ENCODE measurements at regions of chr1 and their contacts with region 1.

Region 1: GRCh38 chr1:193311226-193311948 is 125.0 kb upstream of the B3GALT2 start:
- DNase-seq: no peak
- H3K4me3 ChIP-seq: no peak overlapping the region
- H3K27ac ChIP-seq: no peak overlapping the region
- H3K4me1 ChIP-seq: no peaks in the 10 kb centered on the region
- H3K27me3 ChIP-seq: no peaks in the 10 kb centered on the region
- CTCF ChIP-seq: no peak

Region 2: GRCh38 chr1:193437785-193438184 is 126.4 kb after region 1 on chr1:
- CTCF ChIA-PET with region 1: no interaction called
- POLR2A ChIA-PET with region 1: no interaction called
- intact Hi-C with region 1: no loop called
- DNase-seq: no peak
- H3K4me3 ChIP-seq: no peak overlapping the region
- H3K27ac ChIP-seq: no peak overlapping the region
- H3K4me1 ChIP-seq: no peaks in the 10 kb centered on the region
- H3K27me3 ChIP-seq: no peaks in the 10 kb centered on the region
- CTCF ChIP-seq: no peak

Region 3: GRCh38 chr1:194378517-194378916 is 1067.1 kb after region 1 on chr1:
- CTCF ChIA-PET with region 1: no interaction called
- POLR2A ChIA-PET with region 1: interaction called, 16 read pairs
- intact Hi-C with region 1: no loop called
- DNase-seq: no peak
- H3K4me3 ChIP-seq: no peak overlapping the region
- H3K27ac ChIP-seq: no peak overlapping the region
- H3K4me1 ChIP-seq: no peaks in the 10 kb centered on the region
- H3K27me3 ChIP-seq: no peaks in the 10 kb centered on the region
- CTCF ChIP-seq: no peak

Measured in PC-9 (cell line).